ENCODE measurements at regions of chr2 and their contacts with region 1.

Region 1: DNA sequence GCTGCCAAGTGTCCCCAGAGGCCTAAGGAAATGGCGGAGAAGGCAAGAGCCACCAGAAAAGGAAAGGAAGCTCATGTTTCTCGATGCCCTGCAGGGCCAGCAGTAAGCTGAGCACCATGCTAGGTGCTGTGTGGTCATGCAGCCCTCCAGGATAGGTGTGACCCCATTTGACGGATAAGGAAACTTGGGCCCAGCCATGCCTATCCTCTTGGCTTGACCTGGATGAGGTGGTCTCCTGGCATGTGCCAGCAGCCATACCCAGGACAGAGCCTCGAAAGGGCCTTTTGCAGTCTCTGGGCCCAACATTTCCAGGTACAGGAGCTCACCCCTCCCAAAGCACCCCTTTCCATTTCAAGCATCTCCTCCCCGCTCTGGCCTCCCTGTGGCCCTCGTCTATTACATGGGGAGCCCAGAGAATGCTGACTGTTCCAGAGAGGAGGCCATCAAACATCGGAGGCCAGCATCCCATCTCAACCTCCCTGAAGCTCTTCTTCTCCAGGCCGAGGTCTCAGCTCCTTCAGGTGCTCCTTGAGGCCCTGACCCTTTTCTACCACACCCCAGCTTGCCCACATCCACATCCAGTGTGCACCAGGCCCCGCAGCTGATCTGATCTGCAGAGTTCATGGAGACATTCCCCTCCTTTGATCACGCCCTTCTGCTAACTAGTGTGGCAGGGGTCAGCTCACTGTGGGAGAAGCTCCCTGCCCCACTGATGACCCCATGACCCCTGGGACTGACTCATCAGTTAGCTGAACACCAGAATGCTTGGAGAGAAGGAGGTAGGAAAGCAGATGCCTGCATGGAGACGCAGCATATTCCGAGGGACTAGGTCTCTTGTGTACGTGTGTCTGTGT is 208.4 kb downstream of the TNS1 start:
- DNase-seq: no peak
- H3K4me3 ChIP-seq: no peak overlapping the region
- H3K27ac ChIP-seq: no peak overlapping the region
- H3K4me1 ChIP-seq: no peaks in the 10 kb centered on the region
- H3K27me3 ChIP-seq: no peaks in the 10 kb centered on the region; the same call in 1 of the 2 replicates
- CTCF ChIP-seq: no peak

Region 2: GRCh38 chr2:217489145-217489960 is 305.0 kb before region 1 on chr2:
- CTCF ChIA-PET with region 1: interaction called, 12 read pairs
- POLR2A ChIA-PET with region 1: no interaction called
- intact Hi-C with region 1: no loop called
- DNase-seq: peak in 1 of 2 experiments; percentile 5
- H3K4me3 ChIP-seq: no peak overlapping the region
- H3K27ac ChIP-seq: no peak overlapping the region
- H3K4me1 ChIP-seq: no peaks in the 10 kb centered on the region
- H3K27me3 ChIP-seq: no peaks in the 10 kb centered on the region
- CTCF ChIP-seq: no peak

Measured in PC-9 (cell line).